Aorta (tissue), 5 donors: ENCODE measurements at regions of chr14 and their contacts with region 1.

Region 1: GRCh38 chr14:94080471-94081289 is at the start of gene DDX24:
- DNase-seq: peak; percentile 98 to 99
- ATAC-seq: peak; percentile 99
- H3K4me3 ChIP-seq: peak within 1 kb of the TSS; percentile 57 to 97
- H3K27ac ChIP-seq: peak within 1 kb of the TSS; percentile 45 to 49
- H3K4me1 ChIP-seq: peaks cover 0 to 5% of the 10 kb centered on the region in 2 donors
- H3K27me3 ChIP-seq: no peaks in the 10 kb centered on the region
- total RNA-seq, gene DDX24: 190 to 198 TPM

Region 2: DNA sequence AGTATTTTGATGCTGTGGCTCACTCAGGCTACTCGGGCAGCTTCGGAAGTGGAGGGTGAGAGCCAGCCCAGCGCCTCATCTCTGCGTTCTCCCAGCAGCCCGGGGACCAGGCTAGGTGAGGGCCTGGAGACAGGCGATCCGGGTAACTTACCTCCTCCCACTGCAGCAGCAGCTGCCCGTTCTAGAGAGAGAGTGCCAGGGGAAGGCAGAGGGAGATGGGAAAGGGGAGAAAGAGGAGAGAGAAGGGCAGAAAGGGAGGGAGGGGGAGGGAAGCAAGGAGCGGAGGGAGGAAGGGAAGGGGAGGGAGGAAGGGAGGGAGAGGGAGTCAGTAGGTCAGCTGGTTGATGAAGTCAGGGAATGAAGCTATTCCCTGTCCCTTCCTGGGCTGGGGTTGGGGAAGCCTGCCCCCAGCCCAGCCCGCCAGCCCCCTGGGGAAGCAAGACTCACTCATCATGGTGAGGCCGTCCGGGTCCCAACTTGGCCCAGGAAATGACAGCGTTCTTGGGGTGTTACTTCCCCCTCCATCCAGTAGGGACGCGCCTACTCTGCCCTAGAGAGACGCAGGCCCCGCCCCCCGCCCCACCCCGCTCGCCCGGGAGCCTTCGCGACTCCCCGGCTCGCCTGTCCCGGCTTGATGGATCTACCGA is 48.6 kb after region 1 on chr14 and contains the start of gene IFI27L2:
- intact Hi-C with region 1: loop called (anchors 2 to 5 kb)
- DNase-seq: peak; percentile 83 to 89
- ATAC-seq: peak; percentile 91
- H3K4me3 ChIP-seq: peak within 1 kb of the TSS; percentile 35 to 57
- H3K27ac ChIP-seq: peak within 1 kb of the TSS in 1 of 2 donors; percentile 46
- H3K4me1 ChIP-seq: no peaks in the 10 kb centered on the region
- H3K27me3 ChIP-seq: no peaks in the 10 kb centered on the region
- total RNA-seq, gene IFI27L2: 52.4 to 55.8 TPM

Region 3: DNA sequence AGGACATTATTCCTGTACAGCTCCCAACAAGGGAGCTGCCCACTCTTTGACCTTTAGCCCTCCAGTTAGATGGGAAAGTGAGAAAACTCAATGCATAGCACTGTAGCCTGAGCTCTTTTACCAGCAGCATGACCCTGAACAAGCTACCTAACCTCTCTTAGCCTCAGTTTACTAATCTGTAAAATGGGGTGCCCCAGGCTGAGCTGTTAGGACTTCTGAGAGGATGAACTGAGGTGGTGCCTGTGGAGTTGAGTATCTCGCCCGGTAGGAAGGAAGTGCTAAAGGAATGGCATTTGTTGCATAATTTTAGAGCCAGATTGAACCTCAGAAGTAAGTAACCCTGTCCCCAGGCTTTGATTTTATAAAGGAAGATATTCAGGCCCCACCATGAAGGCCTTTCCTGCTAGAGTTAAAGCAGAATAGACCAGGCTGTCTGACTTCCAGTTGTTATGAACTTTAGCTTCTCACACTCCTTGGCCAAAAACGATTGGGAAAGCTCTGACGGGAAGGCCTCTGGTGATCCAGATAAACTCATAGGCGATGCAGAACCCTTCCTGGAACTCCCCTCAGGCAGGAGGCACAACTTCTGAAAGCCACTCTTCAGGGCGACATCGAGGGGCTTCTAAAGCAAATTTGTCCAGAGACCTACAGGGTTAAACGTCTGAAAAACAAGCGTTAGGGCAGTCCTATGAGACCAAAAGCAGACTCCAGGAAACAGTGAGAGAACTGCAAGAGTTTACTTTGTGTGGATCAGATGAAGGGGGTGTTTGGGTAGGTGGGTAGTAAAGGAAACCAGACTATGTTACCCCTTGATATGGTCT is 214.9 kb after region 1 on chr14:
- intact Hi-C with region 1: no loop called
- DNase-seq: no peak
- ATAC-seq: no peak
- H3K4me3 ChIP-seq: no peak overlapping the region
- H3K27ac ChIP-seq: no peak overlapping the region
- H3K4me1 ChIP-seq: no peaks in the 10 kb centered on the region
- H3K27me3 ChIP-seq: no peaks in the 10 kb centered on the region